Dorsolateral prefrontal cortex (tissue), 120 donors: ENCODE measurements at regions of chr6 and their contacts with region 1.

Region 1: DNA sequence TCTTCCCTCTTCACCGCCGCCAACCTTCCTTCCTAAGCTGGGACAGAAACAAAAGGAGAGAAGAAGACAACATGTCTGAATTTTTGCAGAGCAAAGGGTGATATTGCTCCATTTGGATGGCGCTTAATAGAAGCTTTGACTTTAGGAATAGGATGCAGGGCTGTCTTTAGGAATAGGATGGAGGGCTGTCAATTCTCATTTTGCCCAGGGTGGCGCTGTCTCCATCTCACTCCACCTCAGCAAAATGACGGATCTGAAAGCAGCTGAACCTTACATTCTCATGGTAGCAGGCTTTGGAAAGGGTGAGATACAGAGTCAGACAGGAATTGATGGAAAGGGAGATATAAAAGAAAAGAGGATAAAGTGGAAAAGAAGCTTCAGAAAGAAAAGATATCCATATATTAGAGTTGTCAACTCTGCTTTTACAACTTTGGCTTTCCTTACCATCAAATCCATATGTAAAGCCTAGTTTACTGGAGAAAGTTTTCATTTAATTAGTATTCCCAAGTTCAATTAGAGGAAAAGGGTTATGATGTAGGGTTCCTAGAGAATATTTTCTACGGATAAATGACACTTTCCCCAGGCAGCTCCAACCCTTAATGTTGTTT is 2.4 kb downstream of the MTCL3 start:
- DNase-seq: peak; percentile 40 to 82 (median 66)
- H3K4me3 ChIP-seq: peak overlapping the region; percentile 66 to 93 (median 85)
- H3K27ac ChIP-seq: peak overlapping the region; percentile 51 to 97 (median 91)
- H3K27me3 ChIP-seq: peaks cover 0 to 19% (median 0%) of the 10 kb centered on the region in 45 donors
- CTCF ChIP-seq: peak; percentile 54 to 89 (median 71)

Region 2: DNA sequence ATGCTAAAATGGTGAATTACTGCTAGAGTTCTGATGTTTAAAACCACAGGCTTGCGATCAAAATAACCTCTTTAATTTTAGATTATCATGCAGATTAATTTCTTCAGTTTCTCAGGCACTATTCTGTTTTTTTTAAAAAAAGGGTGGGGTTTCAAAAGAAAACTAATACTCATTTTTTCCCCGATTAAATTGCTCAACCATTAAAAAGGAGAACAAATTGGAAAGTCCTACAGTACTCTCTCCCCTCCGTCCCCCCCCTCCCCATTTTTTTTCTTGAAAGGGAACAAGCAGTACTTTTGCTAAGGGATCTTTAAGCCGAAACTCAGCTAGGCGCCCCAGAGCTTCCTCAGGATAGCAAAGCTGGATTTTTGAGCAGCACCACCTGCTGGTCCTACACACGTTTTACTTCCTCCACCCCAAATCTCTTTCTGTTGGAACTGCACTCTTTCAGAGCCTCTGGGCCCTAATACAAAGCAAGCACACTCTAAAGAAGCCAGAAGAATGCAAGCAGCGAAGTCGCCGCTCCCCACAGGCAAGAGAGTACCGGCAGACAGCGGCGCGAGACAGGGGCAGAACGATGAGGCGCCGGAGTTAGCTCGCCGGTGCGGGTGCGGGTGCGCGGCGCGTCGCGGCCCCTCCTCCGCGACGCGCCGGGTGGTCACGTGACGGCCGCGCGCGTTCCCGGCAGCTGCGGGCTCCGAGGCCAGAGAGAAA is 250.4 kb before region 1 on chr6 and contains the start of gene RNF146:
- intact Hi-C with region 1: loop called in 1 of 2 experiments (anchors 2 kb)
- DNase-seq: peak; percentile 64 to 87 (median 80)
- H3K4me3 ChIP-seq: peak within 1 kb of the TSS; percentile 62 to 97 (median 90)
- H3K27ac ChIP-seq: peak within 1 kb of the TSS; percentile 81 to 100 (median 98)
- H3K27me3 ChIP-seq: no peaks in the 10 kb centered on the region
- CTCF ChIP-seq: peak; percentile 66 to 89 (median 78)
- total RNA-seq, gene RNF146: 63.3 to 109 (median 88.7) TPM

Region 3: GRCh38 chr6:127446356-127446755 is 70.4 kb before region 1 on chr6:
- intact Hi-C with region 1: no loop called
- DNase-seq: no peak
- H3K4me3 ChIP-seq: no peak overlapping the region
- H3K27ac ChIP-seq: no peak overlapping the region
- H3K27me3 ChIP-seq: no peaks in the 10 kb centered on the region
- CTCF ChIP-seq: no peak

Region 4: DNA sequence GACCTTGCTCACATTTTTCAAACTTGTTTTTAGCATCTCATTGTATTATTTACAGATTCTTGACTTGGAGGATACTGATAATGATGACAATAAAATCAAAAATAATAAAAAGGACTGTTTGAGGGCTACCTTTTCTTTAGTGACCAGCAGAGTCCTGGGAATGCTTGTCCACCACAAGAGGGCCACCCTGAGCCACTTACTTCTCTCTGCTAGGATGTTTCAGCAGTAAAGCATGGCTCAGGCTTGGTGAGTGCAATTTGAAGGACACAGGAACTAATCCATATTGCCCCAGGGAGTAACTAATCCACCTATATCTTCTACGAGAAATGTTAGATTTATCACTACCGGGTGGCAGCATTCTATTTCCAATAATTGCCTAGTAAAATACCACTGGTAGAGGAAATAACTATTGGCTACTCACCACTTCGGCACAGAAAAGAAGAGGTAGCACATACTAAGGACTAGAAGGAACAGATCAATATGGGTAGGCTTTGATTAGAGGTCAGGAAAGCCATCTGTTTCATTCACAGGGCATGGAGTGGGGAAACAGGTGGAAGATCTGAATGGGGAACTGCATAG is 51.8 kb before region 1 on chr6:
- intact Hi-C with region 1: loop called in 1 of 2 experiments (anchors 10 kb)
- DNase-seq: peak in 9 of 10 donors; percentile 47 to 74 (median 70)
- H3K4me3 ChIP-seq: no peak overlapping the region
- H3K27ac ChIP-seq: peak overlapping the region in 5 of 59 donors; percentile 11 to 62 (median 37)
- H3K27me3 ChIP-seq: no peaks in the 10 kb centered on the region
- CTCF ChIP-seq: peak; percentile 57 to 94 (median 85)

Region 5: GRCh38 chr6:127484212-127484858 is 32.4 kb before region 1 on chr6:
- intact Hi-C with region 1: loop called in 1 of 2 experiments (anchors 5 kb)
- DNase-seq: no peak
- H3K4me3 ChIP-seq: peak overlapping the region in 39 of 59 donors; percentile 1 to 52 (median 21)
- H3K27ac ChIP-seq: peak overlapping the region in 23 of 59 donors; percentile 2 to 62 (median 29)
- H3K27me3 ChIP-seq: no peaks in the 10 kb centered on the region
- CTCF ChIP-seq: no peak